Esophagus squamous epithelium (tissue), 5 donors: ENCODE measurements at regions of chr22 and their contacts with region 1.

Region 1: GRCh38 chr22:17830043-17830961 is 56.0 kb upstream of the BID start:
- DNase-seq: peak; percentile 32
- H3K4me3 ChIP-seq: no peak overlapping the region
- H3K27ac ChIP-seq: peak overlapping the region; percentile 54 to 83 (median 80)
- H3K4me1 ChIP-seq: peaks cover 8 to 44% (median 17%) of the 10 kb centered on the region in 3 donors
- H3K27me3 ChIP-seq: no peaks in the 10 kb centered on the region
- CTCF ChIP-seq: peak; percentile 95 to 99 (median 99)
- POLR2A ChIP-seq: no peak

Region 2: GRCh38 chr22:17753401-17753989 is 76.8 kb before region 1 on chr22:
- intact Hi-C with region 1: no loop called
- DNase-seq: no peak
- H3K4me3 ChIP-seq: no peak overlapping the region
- H3K27ac ChIP-seq: no peak overlapping the region
- H3K4me1 ChIP-seq: no peaks in the 10 kb centered on the region
- H3K27me3 ChIP-seq: no peaks in the 10 kb centered on the region
- CTCF ChIP-seq: no peak
- POLR2A ChIP-seq: no peak

Region 3: GRCh38 chr22:17867160-17867785 is 37.0 kb after region 1 on chr22:
- intact Hi-C with region 1: no loop called
- DNase-seq: no peak
- H3K4me3 ChIP-seq: no peak overlapping the region
- H3K27ac ChIP-seq: peak overlapping the region in 2 of 4 donors; percentile 1 to 42
- H3K4me1 ChIP-seq: peaks cover 0 to 28% (median 5%) of the 10 kb centered on the region in 3 donors
- H3K27me3 ChIP-seq: no peaks in the 10 kb centered on the region
- CTCF ChIP-seq: no peak
- POLR2A ChIP-seq: no peak

Region 4: DNA sequence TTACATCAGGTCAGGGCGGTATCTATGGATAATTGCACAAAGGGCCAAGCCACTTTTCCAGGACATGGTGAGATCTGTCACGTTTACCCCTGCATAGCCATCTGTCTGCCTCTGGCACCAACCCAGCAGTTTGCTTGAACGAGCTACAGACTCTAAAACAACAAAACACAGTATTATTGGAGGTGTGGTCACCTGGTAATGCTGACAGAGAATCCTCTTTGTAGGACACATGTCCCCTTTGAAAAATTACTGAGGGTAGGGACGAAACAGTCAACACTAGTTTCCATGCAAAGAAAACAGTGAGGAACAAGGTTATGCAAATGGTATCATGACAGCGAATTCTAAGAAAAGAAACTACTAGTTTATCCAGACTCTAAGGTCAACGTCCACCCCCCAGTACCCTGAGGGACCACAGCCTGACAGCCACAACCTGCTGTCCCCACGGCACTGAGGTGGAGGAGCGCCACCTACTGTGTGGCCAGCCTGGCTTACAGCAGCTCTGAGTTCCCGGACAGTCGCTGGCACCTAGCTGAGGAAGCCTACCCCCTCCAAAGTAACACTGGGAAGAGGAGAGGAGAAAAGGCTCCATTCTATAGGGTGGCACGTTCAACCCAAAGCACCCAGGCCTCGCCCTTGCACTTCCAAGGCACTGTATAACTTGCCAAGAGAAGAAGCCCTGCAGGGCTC is 61.3 kb after region 1 on chr22:
- intact Hi-C with region 1: loop called (anchors 10 kb)
- DNase-seq: no peak
- H3K4me3 ChIP-seq: no peak overlapping the region
- H3K27ac ChIP-seq: peak overlapping the region in 2 of 4 donors; percentile 32 to 59
- H3K4me1 ChIP-seq: peaks cover 0 to 23% (median 0%) of the 10 kb centered on the region in 3 donors
- H3K27me3 ChIP-seq: no peaks in the 10 kb centered on the region
- CTCF ChIP-seq: peak in 5 of 6 experiments; percentile 39 to 54 (median 46)
- POLR2A ChIP-seq: no peak

Region 5: GRCh38 chr22:17950651-17951214 is 120.4 kb after region 1 on chr22:
- intact Hi-C with region 1: loop called (anchors 10 kb)
- DNase-seq: no peak
- H3K4me3 ChIP-seq: no peak overlapping the region
- H3K27ac ChIP-seq: peak overlapping the region in 2 of 4 donors; percentile 0 to 37
- H3K4me1 ChIP-seq: peaks cover 15 to 53% (median 24%) of the 10 kb centered on the region in 3 donors
- H3K27me3 ChIP-seq: no peaks in the 10 kb centered on the region
- CTCF ChIP-seq: no peak
- POLR2A ChIP-seq: no peak

Region 6: DNA sequence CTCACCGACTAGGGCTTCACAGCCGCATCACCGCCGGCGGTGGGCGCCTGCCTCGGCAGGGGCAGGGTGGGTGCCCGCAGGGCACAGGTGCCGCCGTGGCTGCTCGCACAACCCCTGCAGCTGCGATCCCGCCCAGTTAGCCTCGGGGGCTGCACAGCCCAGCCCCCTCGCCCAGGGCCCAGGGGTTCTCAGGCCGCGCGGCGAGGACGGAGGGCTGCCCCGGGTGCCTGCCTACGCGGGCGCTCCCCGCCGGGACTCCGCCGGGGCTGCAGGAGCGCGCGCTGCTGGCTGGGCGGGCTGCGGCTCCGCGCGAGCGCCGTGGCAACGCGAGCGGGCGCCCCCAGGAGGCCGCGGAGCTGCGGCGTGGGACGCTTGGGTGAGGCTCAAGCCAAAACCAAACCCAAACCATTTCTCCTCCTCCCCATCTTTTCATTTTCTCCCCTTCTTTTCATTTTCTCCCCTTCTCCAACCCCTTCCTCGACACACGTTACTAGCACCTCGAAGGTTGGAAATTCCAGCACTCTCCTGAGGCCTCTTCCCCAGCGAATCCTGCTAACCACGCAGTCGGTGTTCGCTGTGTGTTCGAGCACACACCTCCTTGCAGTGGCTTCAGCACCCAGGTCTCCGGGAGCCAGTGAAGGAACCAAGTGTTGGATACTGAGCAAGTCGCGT is 194.1 kb after region 1 on chr22 and contains the start of gene MICAL3:
- intact Hi-C with region 1: loop called (anchors 10 kb)
- DNase-seq: no peak
- H3K4me3 ChIP-seq: peak within 1 kb of the TSS; percentile 61 to 84 (median 71)
- H3K27ac ChIP-seq: peak within 1 kb of the TSS; percentile 80 to 90 (median 82)
- H3K4me1 ChIP-seq: peaks cover 11 to 52% (median 14%) of the 10 kb centered on the region in 3 donors
- H3K27me3 ChIP-seq: no peaks in the 10 kb centered on the region
- CTCF ChIP-seq: peak; percentile 30 to 75 (median 56)
- POLR2A ChIP-seq: peak in 1 of 4 donors; percentile 33
- total RNA-seq, gene MICAL3: 11.2 to 30.9 (median 15.9) TPM

Region 7: DNA sequence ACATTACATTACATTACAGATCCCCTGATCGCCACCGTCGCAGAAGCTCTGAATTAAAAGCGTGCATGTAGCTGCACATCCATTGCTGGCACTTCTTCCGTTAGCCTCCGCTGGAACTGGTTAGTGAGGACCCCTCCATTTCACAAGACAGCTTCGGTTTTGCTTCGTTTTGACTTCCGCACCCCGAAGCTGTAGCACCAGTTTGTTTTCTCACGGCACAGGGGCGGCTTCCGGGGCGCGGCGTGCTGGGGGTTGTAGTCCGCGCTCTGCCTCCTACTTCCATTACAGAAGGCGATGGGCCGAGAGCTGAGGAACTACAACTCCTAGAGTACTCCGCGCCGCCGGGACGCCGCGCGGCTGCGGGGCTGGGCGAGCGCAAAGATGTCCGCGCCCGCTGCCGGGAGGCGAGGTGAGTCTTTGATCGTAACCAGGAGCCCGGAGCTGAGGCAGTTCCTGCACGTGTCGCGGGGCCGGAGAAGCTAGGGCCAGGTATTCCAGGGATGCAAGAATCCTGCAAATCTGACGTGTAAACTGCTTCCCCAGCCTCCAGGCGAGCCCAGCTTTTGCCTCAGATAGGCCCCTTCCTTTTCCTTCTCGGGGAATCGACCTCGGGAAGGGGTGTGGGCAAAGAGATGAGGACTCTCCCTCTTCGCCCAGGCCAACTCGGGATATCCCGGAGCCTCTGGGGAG is 247.5 kb after region 1 on chr22 and contains the start of gene PEX26:
- intact Hi-C with region 1: loop called (anchors 5 kb)
- DNase-seq: peak; percentile 89
- H3K4me3 ChIP-seq: peak within 1 kb of the TSS; percentile 81 to 93 (median 87)
- H3K27ac ChIP-seq: peak within 1 kb of the TSS; percentile 84 to 92 (median 87)
- H3K4me1 ChIP-seq: peaks cover 19 to 45% (median 24%) of the 10 kb centered on the region in 3 donors
- H3K27me3 ChIP-seq: no peaks in the 10 kb centered on the region
- CTCF ChIP-seq: peak in 2 of 6 experiments; percentile 4 to 15
- POLR2A ChIP-seq: peak in 3 of 4 donors; percentile 16 to 50 (median 48)
- total RNA-seq, gene PEX26: 17.2 to 32.3 (median 22.9) TPM